Activated CD8-positive, alpha-beta T cell treated with anti-CD3 and anti-CD28 coated beads for 36 hours (primary cell): ENCODE measurements at regions of chr1 and their contacts with region 1.

Region 1: GRCh38 chr1:182397771-182398393 is 2.6 kb downstream of the TEDDM1 start:
- DNase-seq: no peak
- ATAC-seq: no peak
- H3K4me3 Mint-ChIP-seq: no peak overlapping the region
- H3K27ac Mint-ChIP-seq: no peak overlapping the region
- H3K4me1 Mint-ChIP-seq: peaks cover 4% of the 10 kb centered on the region
- H3K27me3 Mint-ChIP-seq: peaks cover 14% of the 10 kb centered on the region
- CTCF ChIP-seq: no peak

Region 2: GRCh38 chr1:182135946-182136345 is 261.9 kb before region 1 on chr1:
- CTCF ChIA-PET with region 1: interaction called, 270 read pairs
- POLR2A ChIA-PET with region 1: no interaction called
- intact Hi-C with region 1: no loop called
- DNase-seq: no peak
- ATAC-seq: peak; percentile 30
- H3K4me3 Mint-ChIP-seq: no peak overlapping the region
- H3K27ac Mint-ChIP-seq: no peak overlapping the region
- H3K4me1 Mint-ChIP-seq: peaks cover 18% of the 10 kb centered on the region
- H3K27me3 Mint-ChIP-seq: no peaks in the 10 kb centered on the region
- CTCF ChIP-seq: no peak

Region 3: GRCh38 chr1:182368903-182369302 is 29.0 kb before region 1 on chr1:
- CTCF ChIA-PET with region 1: no interaction called
- POLR2A ChIA-PET with region 1: no interaction called
- intact Hi-C with region 1: no loop called
- DNase-seq: no peak
- ATAC-seq: no peak
- H3K4me3 Mint-ChIP-seq: no peak overlapping the region
- H3K27ac Mint-ChIP-seq: no peak overlapping the region
- H3K4me1 Mint-ChIP-seq: no peaks in the 10 kb centered on the region
- H3K27me3 Mint-ChIP-seq: no peaks in the 10 kb centered on the region
- CTCF ChIP-seq: no peak

Region 4: GRCh38 chr1:182381962-182382819 is 15.7 kb before region 1 on chr1:
- CTCF ChIA-PET with region 1: interaction called, 18 read pairs
- POLR2A ChIA-PET with region 1: no interaction called
- intact Hi-C with region 1: no loop called
- DNase-seq: no peak
- ATAC-seq: no peak
- H3K4me3 Mint-ChIP-seq: no peak overlapping the region
- H3K27ac Mint-ChIP-seq: no peak overlapping the region
- H3K4me1 Mint-ChIP-seq: no peaks in the 10 kb centered on the region
- H3K27me3 Mint-ChIP-seq: no peaks in the 10 kb centered on the region
- CTCF ChIP-seq: no peak